ENCODE measurements at regions of chr6 and their contacts with region 1.

Region 1: GRCh38 chr6:28981833-28982475 is 23.2 kb downstream of the ZNF311 start:
- DNase-seq: peak; percentile 79 to 87 (median 84)
- H3K4me3 ChIP-seq: peak overlapping the region; percentile 99
- H3K4me3 Mint-ChIP-seq: peak overlapping the region; percentile 87 to 95 (median 94)
- H3K27ac ChIP-seq: no peak overlapping the region
- H3K27ac Mint-ChIP-seq: peak overlapping the region; percentile 84 to 100 (median 95)
- H3K4me1 ChIP-seq: peaks cover 28% of the 10 kb centered on the region
- H3K4me1 Mint-ChIP-seq: peaks cover 37 to 65% (median 46%) of the 10 kb centered on the region in 4 donors
- H3K27me3 ChIP-seq: no peaks in the 10 kb centered on the region
- H3K27me3 Mint-ChIP-seq: peaks cover 14 to 24% of the 10 kb centered on the region in 2 donors

Region 2: GRCh38 chr6:28863604-28864320 is 118.2 kb before region 1 on chr6:
- CTCF ChIA-PET with region 1: interaction called, 3 read pairs
- POLR2A ChIA-PET with region 1: interaction called, 11 read pairs
- intact Hi-C with region 1: loop called (anchors 1 kb)
- DNase-seq: peak; percentile 88 to 91 (median 89)
- H3K4me3 ChIP-seq: peak overlapping the region; percentile 53 to 85
- H3K4me3 Mint-ChIP-seq: peak overlapping the region; percentile 92 to 97 (median 94)
- H3K27ac ChIP-seq: peak overlapping the region; percentile 45
- H3K27ac Mint-ChIP-seq: peak overlapping the region; percentile 79 to 99 (median 97)
- H3K4me1 ChIP-seq: peaks cover 14% of the 10 kb centered on the region
- H3K4me1 Mint-ChIP-seq: peaks cover 21 to 64% (median 43%) of the 10 kb centered on the region in 4 donors
- H3K27me3 ChIP-seq: no peaks in the 10 kb centered on the region
- H3K27me3 Mint-ChIP-seq: peaks cover 4 to 5% of the 10 kb centered on the region in 2 donors

Region 3: DNA sequence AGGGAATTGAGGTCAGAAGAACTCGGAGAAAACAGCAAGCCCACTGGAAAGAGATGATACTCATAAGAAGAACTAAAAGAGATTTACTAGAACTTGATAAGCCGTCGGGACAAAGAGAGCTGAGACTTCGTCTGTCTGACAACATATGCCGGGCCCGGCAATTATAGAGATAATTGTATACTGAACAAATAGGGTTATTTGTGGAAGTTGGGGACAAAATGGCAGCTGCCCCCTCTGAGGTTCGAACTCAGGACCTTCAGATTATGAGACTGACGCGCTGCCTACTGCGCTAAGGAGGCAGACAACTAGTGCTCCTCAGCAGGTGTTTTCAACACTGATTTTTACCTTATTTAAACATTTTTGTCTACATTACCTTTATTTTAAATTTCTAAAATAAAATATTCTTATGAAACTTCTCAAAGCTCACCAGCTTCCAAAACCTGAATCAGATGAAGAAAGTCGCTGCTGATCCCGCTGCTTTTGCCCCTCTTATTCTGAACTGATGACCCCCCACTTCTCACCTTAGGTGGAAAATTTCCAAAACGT is 28.8 kb before region 1 on chr6:
- CTCF ChIA-PET with region 1: no interaction called
- POLR2A ChIA-PET with region 1: interaction called, 5 read pairs
- intact Hi-C with region 1: loop called (anchors 1 kb)
- DNase-seq: peak; percentile 55 to 74 (median 62)
- H3K4me3 ChIP-seq: peak overlapping the region in 1 of 2 donors; percentile 7
- H3K4me3 Mint-ChIP-seq: peak overlapping the region; percentile 71 to 93 (median 84)
- H3K27ac ChIP-seq: no peak overlapping the region
- H3K27ac Mint-ChIP-seq: peak overlapping the region; percentile 37 to 96 (median 81)
- H3K4me1 ChIP-seq: peaks cover 11% of the 10 kb centered on the region
- H3K4me1 Mint-ChIP-seq: peaks cover 17 to 38% (median 26%) of the 10 kb centered on the region in 4 donors
- H3K27me3 ChIP-seq: no peaks in the 10 kb centered on the region
- H3K27me3 Mint-ChIP-seq: peaks cover 6 to 8% of the 10 kb centered on the region in 2 donors

Region 4: GRCh38 chr6:29028821-29029220 is 46.9 kb after region 1 on chr6:
- CTCF ChIA-PET with region 1: no interaction called
- POLR2A ChIA-PET with region 1: no interaction called
- intact Hi-C with region 1: no loop called
- DNase-seq: no peak
- H3K4me3 ChIP-seq: no peak overlapping the region
- H3K4me3 Mint-ChIP-seq: no peak overlapping the region
- H3K27ac ChIP-seq: no peak overlapping the region
- H3K27ac Mint-ChIP-seq: no peak overlapping the region
- H3K4me1 ChIP-seq: no peaks in the 10 kb centered on the region
- H3K4me1 Mint-ChIP-seq: no peaks in the 10 kb centered on the region
- H3K27me3 ChIP-seq: peaks cover 8% of the 10 kb centered on the region
- H3K27me3 Mint-ChIP-seq: peaks cover 34 to 42% of the 10 kb centered on the region in 2 donors